B cell (primary cell): ENCODE measurements at regions of chr11 and their contacts with region 1.

Region 1: DNA sequence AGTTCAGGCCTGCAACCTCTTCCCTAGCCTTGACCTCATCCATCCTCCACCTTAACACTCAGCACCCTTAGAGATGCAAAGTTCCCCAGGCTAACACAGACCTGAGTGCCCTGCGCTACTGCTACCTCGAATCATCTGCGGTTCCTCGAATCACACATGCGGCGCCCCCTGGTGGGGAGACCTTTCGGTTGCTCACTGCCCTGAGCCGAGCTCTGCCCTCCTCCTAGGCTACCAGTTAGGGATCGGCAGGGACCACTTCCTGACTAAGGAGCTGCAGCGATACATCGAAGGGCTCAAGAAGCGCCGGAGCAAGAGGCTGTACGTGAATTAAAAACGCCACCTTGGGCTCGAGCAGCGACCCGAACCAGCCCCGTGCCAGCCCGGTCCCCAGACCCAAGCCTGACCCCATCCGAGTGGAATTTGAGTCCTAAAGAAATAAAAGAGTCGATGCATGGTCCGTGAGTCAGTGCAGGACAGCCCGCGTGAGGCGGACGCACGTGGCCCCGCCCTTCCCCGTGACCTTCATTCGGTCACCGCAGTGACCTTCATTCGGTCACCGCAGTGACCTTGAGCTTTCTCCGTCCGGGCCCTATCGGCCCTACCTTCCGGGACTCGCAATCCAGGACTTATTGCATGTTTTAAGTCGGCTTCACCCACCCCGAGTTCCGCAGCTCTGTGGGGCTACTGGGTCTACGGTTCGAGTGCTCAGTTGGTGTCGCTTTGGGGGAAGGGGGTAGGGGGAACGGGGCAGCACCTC is 830 bp upstream of the ESRRA start:
- DNase-seq: peak; percentile 92
- ATAC-seq: peak; percentile 13
- H3K4me3 ChIP-seq: peak overlapping the region; percentile 78 to 88 (median 85)
- H3K4me3 Mint-ChIP-seq: peak overlapping the region; percentile 90
- H3K27ac ChIP-seq: peak overlapping the region; percentile 93 to 94
- H3K27ac Mint-ChIP-seq: peak overlapping the region; percentile 89
- H3K4me1 ChIP-seq: peaks cover 26 to 47% of the 10 kb centered on the region in 2 donors
- H3K4me1 Mint-ChIP-seq: peaks cover 36% of the 10 kb centered on the region
- H3K27me3 ChIP-seq: peaks cover 0 to 32% (median 13%) of the 10 kb centered on the region in 4 experiments
- H3K27me3 Mint-ChIP-seq: peaks cover 13% of the 10 kb centered on the region
- CTCF ChIP-seq: peak; percentile 89

Region 2: GRCh38 chr11:64204464-64204989 is 100.0 kb before region 1 on chr11:
- CTCF ChIA-PET with region 1: interaction called, 243 read pairs
- POLR2A ChIA-PET with region 1: interaction called, 21 read pairs
- intact Hi-C with region 1: loop called (anchors 1 kb)
- DNase-seq: peak; percentile 89
- ATAC-seq: peak; percentile 48
- H3K4me3 ChIP-seq: no peak overlapping the region
- H3K4me3 Mint-ChIP-seq: peak overlapping the region; percentile 80
- H3K27ac ChIP-seq: peak overlapping the region in 1 of 2 donors; percentile 35
- H3K27ac Mint-ChIP-seq: peak overlapping the region; percentile 95
- H3K4me1 ChIP-seq: peaks cover 30 to 45% of the 10 kb centered on the region in 2 donors
- H3K4me1 Mint-ChIP-seq: peaks cover 44% of the 10 kb centered on the region
- H3K27me3 ChIP-seq: no peaks in the 10 kb centered on the region
- H3K27me3 Mint-ChIP-seq: no peaks in the 10 kb centered on the region
- CTCF ChIP-seq: peak; percentile 75

Region 3: DNA sequence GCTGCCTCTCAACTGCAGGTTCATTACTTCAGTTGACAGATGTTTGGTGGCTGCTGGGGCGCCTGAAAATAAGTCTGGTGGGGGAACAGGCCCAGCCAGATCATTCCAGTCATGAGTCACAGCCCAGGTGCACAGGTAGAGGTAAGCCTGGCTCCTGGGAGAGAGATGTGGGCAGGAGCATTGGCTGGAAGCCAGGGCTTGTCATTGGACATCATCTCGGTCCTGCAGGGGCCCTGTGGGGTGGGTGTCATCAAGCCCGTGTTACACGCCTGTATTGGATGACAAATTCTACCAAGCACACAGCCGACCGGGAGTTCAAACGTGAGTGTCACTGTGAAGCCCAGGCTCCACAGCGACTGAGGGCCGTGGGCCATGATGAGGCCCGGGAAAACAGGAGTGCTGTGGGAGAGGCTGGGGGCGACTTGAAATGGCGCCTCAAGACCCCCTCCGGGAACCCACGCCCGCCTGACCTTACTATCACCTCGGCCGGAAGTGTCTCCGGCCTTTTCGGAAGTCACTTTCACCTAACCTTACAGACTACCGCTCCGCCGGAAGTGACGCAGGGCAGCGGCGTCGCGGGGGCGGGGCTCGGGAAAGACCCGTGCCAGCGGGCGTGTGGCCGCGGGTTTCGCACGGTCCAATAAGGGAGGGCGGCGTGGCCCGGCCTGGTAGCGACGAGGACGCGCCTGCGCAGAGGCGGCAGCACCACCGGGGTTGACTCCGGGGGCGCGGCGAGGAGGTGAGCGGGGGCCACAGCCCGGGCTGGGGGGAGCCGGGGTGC is 63.9 kb before region 1 on chr11 and contains the start of gene FKBP2:
- CTCF ChIA-PET with region 1: interaction called, 18 read pairs
- POLR2A ChIA-PET with region 1: interaction called, 6 read pairs
- intact Hi-C with region 1: loop called (anchors 1 kb)
- DNase-seq: peak; percentile 99
- ATAC-seq: peak; percentile 58
- H3K4me3 ChIP-seq: peak within 1 kb of the TSS in 4 of 5 experiments; percentile 76 to 91 (median 83)
- H3K4me3 Mint-ChIP-seq: peak within 1 kb of the TSS; percentile 91
- H3K27ac ChIP-seq: peak within 1 kb of the TSS; percentile 98
- H3K27ac Mint-ChIP-seq: peak within 1 kb of the TSS; percentile 97
- H3K4me1 ChIP-seq: peaks cover 31 to 63% of the 10 kb centered on the region in 2 donors
- H3K4me1 Mint-ChIP-seq: peaks cover 62% of the 10 kb centered on the region
- H3K27me3 ChIP-seq: no peaks in the 10 kb centered on the region
- H3K27me3 Mint-ChIP-seq: no peaks in the 10 kb centered on the region
- CTCF ChIP-seq: no peak
- total RNA-seq, gene FKBP2: 23.7 and 25.7 TPM in 2 replicates

Region 4: DNA sequence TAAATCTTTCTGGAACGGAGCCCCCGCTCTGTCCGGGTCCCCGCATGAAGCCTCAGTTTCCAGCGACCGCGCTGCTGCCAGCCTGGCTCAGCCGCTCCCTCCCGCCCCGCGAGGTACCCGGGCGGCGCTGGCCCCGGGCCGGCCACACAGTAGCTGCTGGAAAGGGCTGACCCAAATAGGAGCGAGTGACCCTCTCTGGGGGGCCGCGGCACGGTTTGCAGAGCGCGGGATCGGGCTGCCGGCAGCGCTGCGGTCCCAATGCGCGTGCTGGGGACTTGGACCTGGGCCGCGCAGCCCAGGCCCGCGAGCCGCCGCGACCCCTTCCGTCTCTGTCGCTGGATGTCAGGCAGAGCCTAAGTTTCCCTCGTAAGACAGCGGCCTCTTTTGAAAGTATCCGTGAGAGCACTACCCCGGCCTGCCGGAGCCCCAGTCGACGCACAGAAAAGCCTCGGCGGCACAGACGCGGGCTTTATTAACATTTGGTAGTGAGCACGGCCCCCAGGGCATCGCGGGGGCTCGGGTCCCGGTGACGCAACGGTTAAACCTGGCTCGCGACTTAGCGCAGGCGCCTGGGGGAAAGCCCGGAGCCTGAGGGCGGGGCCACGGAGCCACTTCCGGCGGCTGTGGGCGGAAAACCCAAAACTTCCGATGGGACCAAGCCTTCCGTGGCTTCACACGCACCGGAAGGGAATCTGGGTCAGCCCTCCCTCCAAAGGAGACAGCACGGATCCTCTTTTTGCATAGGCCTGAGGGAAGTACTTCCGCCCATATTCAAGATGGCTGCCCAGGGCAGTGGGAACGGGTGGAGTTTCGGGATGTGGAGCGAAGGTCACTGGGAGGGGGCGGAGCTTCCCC is 34.9 kb before region 1 on chr11:
- CTCF ChIA-PET with region 1: interaction called, 73 read pairs
- POLR2A ChIA-PET with region 1: interaction called, 18 read pairs
- intact Hi-C with region 1: no loop called
- DNase-seq: peak; percentile 99
- ATAC-seq: peak; percentile 73
- H3K4me3 ChIP-seq: peak overlapping the region; percentile 79 to 96 (median 87)
- H3K4me3 Mint-ChIP-seq: peak overlapping the region; percentile 100
- H3K27ac ChIP-seq: peak overlapping the region; percentile 89 to 91
- H3K27ac Mint-ChIP-seq: peak overlapping the region; percentile 99
- H3K4me1 ChIP-seq: peaks cover 14 to 29% of the 10 kb centered on the region in 2 donors
- H3K4me1 Mint-ChIP-seq: peaks cover 19% of the 10 kb centered on the region
- H3K27me3 ChIP-seq: no peaks in the 10 kb centered on the region
- H3K27me3 Mint-ChIP-seq: no peaks in the 10 kb centered on the region
- CTCF ChIP-seq: peak; percentile 37

Region 5: GRCh38 chr11:64284048-64284961 is 20.2 kb before region 1 on chr11 and contains the start of gene BAD:
- CTCF ChIA-PET with region 1: interaction called, 47 read pairs
- POLR2A ChIA-PET with region 1: interaction called, 5 read pairs
- intact Hi-C with region 1: loop called (anchors 1 kb)
- DNase-seq: peak; percentile 96
- ATAC-seq: peak; percentile 77
- H3K4me3 ChIP-seq: peak within 1 kb of the TSS; percentile 61 to 97 (median 90)
- H3K4me3 Mint-ChIP-seq: peak within 1 kb of the TSS; percentile 90
- H3K27ac ChIP-seq: peak within 1 kb of the TSS; percentile 100
- H3K27ac Mint-ChIP-seq: peak within 1 kb of the TSS; percentile 96
- H3K4me1 ChIP-seq: peaks cover 13 to 18% of the 10 kb centered on the region in 2 donors
- H3K4me1 Mint-ChIP-seq: peaks cover 20% of the 10 kb centered on the region
- H3K27me3 ChIP-seq: no peaks in the 10 kb centered on the region
- H3K27me3 Mint-ChIP-seq: no peaks in the 10 kb centered on the region
- CTCF ChIP-seq: no peak
- total RNA-seq, gene BAD: 24.0 and 25.0 TPM in 2 replicates

Region 6: GRCh38 chr11:64331557-64332371 is 27.3 kb after region 1 on chr11:
- CTCF ChIA-PET with region 1: interaction called, 40 read pairs
- POLR2A ChIA-PET with region 1: no interaction called
- intact Hi-C with region 1: no loop called
- DNase-seq: peak; percentile 69
- ATAC-seq: peak; percentile 23
- H3K4me3 ChIP-seq: no peak overlapping the region
- H3K4me3 Mint-ChIP-seq: peak overlapping the region; percentile 27
- H3K27ac ChIP-seq: no peak overlapping the region
- H3K27ac Mint-ChIP-seq: peak overlapping the region; percentile 57
- H3K4me1 ChIP-seq: peaks cover 20 to 32% of the 10 kb centered on the region in 2 donors
- H3K4me1 Mint-ChIP-seq: peaks cover 34% of the 10 kb centered on the region
- H3K27me3 ChIP-seq: no peaks in the 10 kb centered on the region
- H3K27me3 Mint-ChIP-seq: no peaks in the 10 kb centered on the region
- CTCF ChIP-seq: peak; percentile 66

Region 7: DNA sequence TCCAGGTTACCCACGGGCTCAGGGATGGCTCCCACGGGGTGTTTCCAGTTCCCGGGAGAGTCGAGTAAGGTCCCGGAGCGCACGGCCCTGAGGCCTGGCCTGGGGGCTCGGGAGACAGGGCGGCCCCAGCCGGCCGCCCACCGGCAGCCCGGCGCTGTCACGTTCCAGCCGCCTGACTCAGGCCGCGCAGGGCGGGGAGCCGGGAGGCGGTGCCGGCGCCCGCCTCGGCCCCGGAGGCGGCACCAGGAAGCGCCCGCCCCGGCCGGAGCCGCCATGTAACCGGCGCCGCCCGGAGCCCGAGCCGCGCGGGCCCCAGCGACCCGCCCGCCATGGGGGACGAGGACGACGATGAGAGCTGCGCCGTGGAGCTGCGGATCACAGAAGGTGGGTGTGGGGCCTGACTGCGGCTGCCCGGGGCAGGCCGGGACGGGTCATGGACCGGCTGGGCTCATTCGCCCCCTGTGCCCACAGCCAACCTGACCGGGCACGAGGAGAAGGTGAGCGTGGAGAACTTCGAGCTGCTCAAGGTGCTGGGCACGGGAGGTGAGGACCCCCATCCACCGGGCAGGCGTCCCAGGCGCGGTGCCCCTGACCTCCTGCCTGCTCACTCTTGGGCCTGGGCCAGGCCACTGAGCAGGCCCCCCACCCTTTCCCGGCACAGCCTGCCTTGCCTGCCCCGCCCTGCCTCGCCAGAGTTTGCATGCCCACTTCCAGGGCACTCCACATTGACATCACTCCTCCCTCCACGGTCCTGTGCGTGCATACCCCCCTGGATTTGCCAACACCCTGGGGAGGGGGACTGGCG is 54.6 kb after region 1 on chr11 and contains the start of gene RPS6KA4:
- CTCF ChIA-PET with region 1: interaction called, 11 read pairs
- POLR2A ChIA-PET with region 1: interaction called, 6 read pairs
- intact Hi-C with region 1: loop called (anchors 1 kb)
- DNase-seq: peak; percentile 68
- ATAC-seq: peak; percentile 72
- H3K4me3 ChIP-seq: peak within 1 kb of the TSS; percentile 26 to 86 (median 75)
- H3K4me3 Mint-ChIP-seq: peak within 1 kb of the TSS; percentile 94
- H3K27ac ChIP-seq: peak within 1 kb of the TSS; percentile 12 to 46
- H3K27ac Mint-ChIP-seq: peak within 1 kb of the TSS; percentile 81
- H3K4me1 ChIP-seq: peaks cover 27 to 51% of the 10 kb centered on the region in 2 donors
- H3K4me1 Mint-ChIP-seq: peaks cover 43% of the 10 kb centered on the region
- H3K27me3 ChIP-seq: no peaks in the 10 kb centered on the region
- H3K27me3 Mint-ChIP-seq: no peaks in the 10 kb centered on the region
- CTCF ChIP-seq: no peak
- total RNA-seq, gene RPS6KA4: 22.6 and 24.2 TPM in 2 replicates

Region 8: GRCh38 chr11:65546217-65546958 is 1241.9 kb after region 1 on chr11:
- CTCF ChIA-PET with region 1: no interaction called
- POLR2A ChIA-PET with region 1: no interaction called
- intact Hi-C with region 1: no loop called
- DNase-seq: peak; percentile 98
- ATAC-seq: peak; percentile 89
- H3K4me3 ChIP-seq: peak overlapping the region in 4 of 5 experiments; percentile 40 to 60 (median 52)
- H3K4me3 Mint-ChIP-seq: peak overlapping the region; percentile 89
- H3K27ac ChIP-seq: peak overlapping the region; percentile 79 to 93
- H3K27ac Mint-ChIP-seq: peak overlapping the region; percentile 93
- H3K4me1 ChIP-seq: peaks cover 34 to 50% of the 10 kb centered on the region in 2 donors
- H3K4me1 Mint-ChIP-seq: peaks cover 59% of the 10 kb centered on the region
- H3K27me3 ChIP-seq: no peaks in the 10 kb centered on the region
- H3K27me3 Mint-ChIP-seq: no peaks in the 10 kb centered on the region
- CTCF ChIP-seq: no peak